Calu3 (cell line): ENCODE measurements at regions of chr18 and their contacts with region 1.

Region 1: GRCh38 chr18:8704361-8705279 is 736 bp upstream of the MTCL1 start:
- DNase-seq: peak; percentile 98
- H3K4me3 Mint-ChIP-seq: peak overlapping the region; percentile 77
- H3K27ac Mint-ChIP-seq: peak overlapping the region; percentile 86
- H3K4me1 Mint-ChIP-seq: peaks cover 49% of the 10 kb centered on the region
- H3K27me3 Mint-ChIP-seq: no peaks in the 10 kb centered on the region
- CTCF ChIP-seq: no peak

Region 2: DNA sequence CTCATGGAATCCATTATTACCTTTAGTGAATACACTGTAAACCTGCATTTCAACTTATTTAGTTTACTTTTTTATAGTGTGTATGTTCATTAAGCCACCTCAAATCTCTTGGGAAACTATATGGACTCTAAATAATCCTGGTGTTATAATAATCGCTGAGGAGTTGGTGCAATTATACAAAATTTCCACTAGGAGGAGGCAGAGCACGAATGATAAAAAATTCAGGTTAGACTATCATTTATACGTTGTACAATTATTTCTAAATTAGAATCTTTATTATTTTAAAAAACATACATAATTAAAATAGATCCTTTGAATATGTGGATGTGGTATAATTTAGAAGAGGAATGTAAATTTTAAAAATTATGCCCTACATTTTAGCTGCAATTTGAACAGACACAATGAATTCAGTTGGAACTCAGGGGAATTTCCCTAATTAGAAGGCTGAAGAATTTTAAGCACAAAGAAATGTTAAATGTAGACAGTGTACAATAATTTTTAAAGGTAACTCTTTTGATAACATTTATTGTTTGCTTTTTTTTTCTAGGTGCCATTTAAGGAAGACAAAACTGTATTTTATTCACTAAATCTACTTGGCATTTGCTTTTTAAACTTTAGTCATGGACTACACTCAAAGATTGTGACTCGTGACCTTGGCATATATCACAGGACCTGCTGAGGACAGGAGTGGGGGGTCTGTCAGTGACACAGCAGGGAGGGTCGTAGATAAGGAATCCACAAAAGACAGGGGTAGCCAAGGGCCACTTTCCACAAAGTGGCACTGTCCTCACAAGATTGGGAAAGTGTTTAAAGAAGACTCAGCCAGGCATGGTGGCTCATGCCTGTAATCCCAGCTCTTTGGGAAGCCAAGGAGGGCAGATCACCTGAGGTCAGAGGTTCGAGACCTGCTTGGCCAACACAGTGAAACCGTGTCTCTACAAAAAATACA is 49.8 kb before region 1 on chr18:
- CTCF ChIA-PET with region 1: no interaction called
- intact Hi-C with region 1: loop called (anchors 5 kb)
- DNase-seq: no peak
- H3K4me3 Mint-ChIP-seq: no peak overlapping the region
- H3K27ac Mint-ChIP-seq: no peak overlapping the region
- H3K4me1 Mint-ChIP-seq: no peaks in the 10 kb centered on the region
- H3K27me3 Mint-ChIP-seq: no peaks in the 10 kb centered on the region
- CTCF ChIP-seq: peak; percentile 59

Region 3: DNA sequence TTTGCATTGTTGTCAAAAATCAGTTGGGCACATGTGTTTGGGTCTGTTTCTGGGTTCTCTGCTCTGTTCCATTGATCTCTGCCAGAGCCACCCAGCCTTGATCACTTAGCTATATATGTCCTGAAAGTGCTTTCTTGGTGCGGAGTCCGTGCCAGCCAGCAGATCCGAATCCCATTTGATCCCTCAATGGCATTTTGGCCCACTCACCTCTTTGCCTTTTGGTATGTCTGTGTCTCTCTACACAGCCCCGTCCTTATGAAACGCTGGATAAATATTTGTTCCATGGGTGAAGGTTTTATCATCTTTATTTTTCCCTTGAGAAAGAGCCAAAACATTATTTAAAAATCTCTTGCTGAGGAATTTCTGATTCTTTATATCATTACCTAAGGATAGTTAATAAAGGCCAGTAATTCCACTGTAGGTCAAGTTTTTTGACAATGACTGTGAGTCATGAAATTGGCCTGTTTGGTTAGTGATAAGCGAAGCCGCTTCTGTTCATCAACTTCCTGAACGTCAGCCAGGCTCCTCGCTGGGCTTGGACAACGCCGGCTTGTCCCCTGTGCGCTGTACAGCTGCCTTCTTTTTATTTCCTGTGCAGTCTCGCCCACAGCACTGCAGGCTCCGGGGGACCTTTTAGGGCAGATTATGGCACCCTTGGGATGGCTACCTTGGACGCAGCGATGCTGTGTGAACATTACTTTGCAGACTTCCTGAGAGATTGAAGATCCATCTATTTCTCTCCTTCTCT is 25.6 kb after region 1 on chr18:
- CTCF ChIA-PET with region 1: interaction called, 6 read pairs
- intact Hi-C with region 1: loop called (anchors 1 kb)
- DNase-seq: peak; percentile 80
- H3K4me3 Mint-ChIP-seq: peak overlapping the region; percentile 65
- H3K27ac Mint-ChIP-seq: peak overlapping the region; percentile 98
- H3K4me1 Mint-ChIP-seq: peaks cover 77% of the 10 kb centered on the region
- H3K27me3 Mint-ChIP-seq: no peaks in the 10 kb centered on the region
- CTCF ChIP-seq: no peak

Region 4: DNA sequence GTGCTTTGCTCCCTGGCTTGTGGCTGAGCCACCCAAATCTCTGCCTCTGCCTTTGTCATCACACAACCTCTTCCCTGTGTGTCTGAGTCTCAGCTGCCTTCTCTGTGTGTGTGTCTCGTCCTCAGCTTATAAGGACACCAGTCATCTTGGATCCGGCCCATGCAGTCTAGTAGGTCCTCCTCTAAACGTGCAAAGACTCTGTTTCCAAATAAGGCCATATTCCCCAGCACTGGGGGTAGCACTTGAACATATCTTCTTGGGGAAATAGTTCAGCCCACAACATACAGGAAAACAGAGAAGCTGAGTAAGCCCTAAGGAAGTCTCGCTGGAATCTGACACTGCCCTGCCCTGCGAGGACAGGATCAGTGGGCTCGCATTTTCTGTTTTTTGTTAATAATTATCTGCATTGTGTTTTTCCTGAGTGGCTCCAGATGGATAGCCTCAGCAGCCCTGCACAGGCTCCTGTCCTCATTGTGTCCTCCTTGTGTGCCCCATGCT is 42.9 kb after region 1 on chr18:
- CTCF ChIA-PET with region 1: no interaction called
- intact Hi-C with region 1: loop called (anchors 5 kb)
- DNase-seq: peak; percentile 42
- H3K4me3 Mint-ChIP-seq: peak overlapping the region; percentile 57
- H3K27ac Mint-ChIP-seq: peak overlapping the region; percentile 90
- H3K4me1 Mint-ChIP-seq: peaks cover 81% of the 10 kb centered on the region
- H3K27me3 Mint-ChIP-seq: no peaks in the 10 kb centered on the region
- CTCF ChIP-seq: no peak

Region 5: DNA sequence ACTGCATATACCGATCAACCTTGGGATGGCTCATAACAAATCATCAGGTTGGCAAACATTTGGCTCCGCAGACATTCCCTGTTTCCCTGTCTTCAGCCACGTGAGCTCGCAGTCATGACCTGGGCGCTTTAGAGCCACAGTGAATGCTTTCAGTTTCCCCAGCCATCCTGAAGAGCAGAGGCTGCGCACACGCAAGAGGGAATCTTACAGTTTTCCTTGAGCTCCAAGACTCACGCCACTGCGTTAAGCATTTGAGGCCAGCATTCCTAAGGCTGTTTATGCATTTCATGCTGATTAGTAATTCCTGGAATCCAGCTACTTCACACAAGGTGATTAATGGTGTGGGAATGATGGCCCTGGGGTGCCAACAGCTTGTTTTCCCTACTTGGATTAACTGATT is 95.8 kb after region 1 on chr18:
- CTCF ChIA-PET with region 1: interaction called, 3 read pairs
- intact Hi-C with region 1: loop called (anchors 5 kb)
- DNase-seq: peak; percentile 37
- H3K4me3 Mint-ChIP-seq: no peak overlapping the region
- H3K27ac Mint-ChIP-seq: peak overlapping the region; percentile 94
- H3K4me1 Mint-ChIP-seq: peaks cover 80% of the 10 kb centered on the region
- H3K27me3 Mint-ChIP-seq: no peaks in the 10 kb centered on the region
- CTCF ChIP-seq: no peak

Region 6: GRCh38 chr18:8890957-8891464 is 186.4 kb after region 1 on chr18:
- CTCF ChIA-PET with region 1: no interaction called
- intact Hi-C with region 1: loop called (anchors 10 kb)
- DNase-seq: peak; percentile 75
- H3K4me3 Mint-ChIP-seq: peak overlapping the region; percentile 48
- H3K27ac Mint-ChIP-seq: peak overlapping the region; percentile 92
- H3K4me1 Mint-ChIP-seq: peaks cover 45% of the 10 kb centered on the region
- H3K27me3 Mint-ChIP-seq: no peaks in the 10 kb centered on the region
- CTCF ChIP-seq: no peak

Region 7: DNA sequence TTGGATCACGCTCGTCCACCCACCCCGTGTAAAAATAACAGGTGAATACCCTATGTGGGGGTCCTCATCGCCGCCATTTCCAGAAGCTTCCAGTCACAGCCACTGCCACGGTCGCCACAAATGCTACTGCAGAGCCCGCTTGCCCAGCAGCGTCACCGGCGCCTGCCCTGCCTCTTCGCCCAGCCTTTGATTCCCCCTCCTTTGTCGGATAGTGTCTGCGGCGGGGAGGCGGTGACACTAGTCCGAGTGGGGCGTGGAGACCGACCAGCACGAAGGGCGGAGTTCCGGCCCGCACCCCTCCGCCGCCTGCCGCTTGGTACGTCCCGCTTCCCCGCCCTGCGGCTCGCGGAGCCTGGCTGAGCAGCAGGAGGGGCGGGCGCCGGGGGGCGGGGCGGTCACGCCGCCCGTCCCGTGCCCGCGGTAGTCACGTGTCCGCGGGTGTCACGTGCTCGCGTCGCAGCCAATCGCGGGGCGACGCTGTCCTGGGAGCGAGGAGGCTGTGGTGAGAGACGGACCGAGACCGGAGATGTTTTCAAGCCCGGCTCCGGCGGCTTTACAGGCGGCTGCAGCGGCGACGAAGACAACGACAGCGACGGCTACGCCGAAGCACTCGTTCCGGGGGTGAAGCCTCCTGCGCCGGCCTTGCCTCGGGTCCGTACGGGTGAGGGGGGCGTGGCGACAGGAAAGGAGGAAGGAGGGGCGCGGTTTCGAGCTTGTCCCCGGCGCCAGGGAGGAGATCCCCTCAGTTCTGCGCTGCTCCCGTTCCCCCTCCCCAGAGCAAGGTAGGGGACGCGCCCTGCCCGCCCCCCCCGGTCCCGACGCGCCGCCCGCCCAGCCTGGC is 431.9 kb after region 1 on chr18 and contains the start of gene ANKRD12:
- CTCF ChIA-PET with region 1: no interaction called
- intact Hi-C with region 1: loop called (anchors 10 kb)
- DNase-seq: peak; percentile 97
- H3K4me3 Mint-ChIP-seq: peak within 1 kb of the TSS; percentile 94
- H3K27ac Mint-ChIP-seq: peak within 1 kb of the TSS; percentile 96
- H3K4me1 Mint-ChIP-seq: peaks cover 54% of the 10 kb centered on the region
- H3K27me3 Mint-ChIP-seq: no peaks in the 10 kb centered on the region
- CTCF ChIP-seq: no peak
- total RNA-seq, gene ANKRD12: 36.3 and 40.7 TPM in 2 replicates